SK-N-SH (cell line): ENCODE measurements at regions of chr5 and their contacts with region 1.

Region 1: GRCh38 chr5:33470544-33470943 is 29.8 kb downstream of the TARS1 start:
- DNase-seq: peak; percentile 30
- H3K4me3 ChIP-seq: no peak overlapping the region
- H3K27ac ChIP-seq: no peak overlapping the region; a peak in 1 of 4 replicates
- H3K4me1 ChIP-seq: no peaks in the 10 kb centered on the region; a peak in 1 of 4 replicates
- H3K27me3 ChIP-seq: no peaks in the 10 kb centered on the region
- CTCF ChIP-seq: peak; percentile 58
- EP300 ChIP-seq: no peak
- RAD21 ChIP-seq: peak; percentile 71

Region 2: DNA sequence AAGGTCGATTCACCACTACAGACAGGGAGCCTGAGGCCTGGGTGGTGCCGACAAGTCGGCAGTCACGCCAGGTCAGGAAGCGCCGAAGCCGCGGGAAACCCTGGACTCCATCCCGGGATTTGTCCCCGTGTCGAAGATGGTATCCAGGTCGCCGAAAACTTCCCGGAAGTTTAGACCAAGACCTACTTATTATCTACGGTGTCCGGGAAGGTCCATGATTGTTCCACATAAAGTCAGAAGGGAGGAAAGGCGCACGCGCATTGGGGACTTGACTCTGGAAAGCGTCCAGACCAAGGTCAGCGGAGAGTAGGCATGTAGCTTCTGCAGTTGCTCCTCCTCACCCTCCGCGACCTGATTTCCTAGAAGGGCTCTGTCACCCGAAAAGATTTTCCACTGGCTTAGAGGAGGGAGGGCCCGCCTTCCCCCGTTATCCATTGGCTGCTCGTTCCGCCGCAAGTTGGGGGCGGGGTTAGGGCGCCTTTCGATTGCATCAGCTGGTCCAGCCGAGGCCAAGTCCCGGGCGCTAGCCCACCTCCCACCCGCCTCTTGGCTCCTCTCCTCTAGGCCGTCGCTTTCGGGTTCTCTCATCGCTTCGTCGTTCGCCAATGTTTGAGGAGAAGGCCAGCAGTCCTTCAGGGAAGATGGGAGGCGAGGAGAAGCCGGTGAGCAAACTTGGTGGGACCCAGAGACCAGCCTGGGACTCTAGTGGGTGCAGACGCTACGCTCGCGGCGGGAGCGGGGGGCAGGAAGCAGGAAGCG is 29.9 kb before region 1 on chr5 and contains the start of gene TARS1:
- CTCF ChIA-PET with region 1: interaction called, 15 read pairs
- POLR2A ChIA-PET with region 1: no interaction called
- DNase-seq: peak; percentile 91
- H3K4me3 ChIP-seq: peak within 1 kb of the TSS; percentile 90 to 94
- H3K27ac ChIP-seq: peak within 1 kb of the TSS; percentile 99
- H3K4me1 ChIP-seq: peaks cover 8 to 10% of the 10 kb centered on the region in 2 experiments; a peak in 3 of 4 replicates
- H3K27me3 ChIP-seq: no peaks in the 10 kb centered on the region
- CTCF ChIP-seq: no peak
- EP300 ChIP-seq: peak in 1 of 2 experiments; percentile 47; a peak in 1 of 4 replicates
- RAD21 ChIP-seq: no peak
- polyA plus RNA-seq, gene TARS1: 58.4 and 74.1 TPM in 2 replicates

Region 3: DNA sequence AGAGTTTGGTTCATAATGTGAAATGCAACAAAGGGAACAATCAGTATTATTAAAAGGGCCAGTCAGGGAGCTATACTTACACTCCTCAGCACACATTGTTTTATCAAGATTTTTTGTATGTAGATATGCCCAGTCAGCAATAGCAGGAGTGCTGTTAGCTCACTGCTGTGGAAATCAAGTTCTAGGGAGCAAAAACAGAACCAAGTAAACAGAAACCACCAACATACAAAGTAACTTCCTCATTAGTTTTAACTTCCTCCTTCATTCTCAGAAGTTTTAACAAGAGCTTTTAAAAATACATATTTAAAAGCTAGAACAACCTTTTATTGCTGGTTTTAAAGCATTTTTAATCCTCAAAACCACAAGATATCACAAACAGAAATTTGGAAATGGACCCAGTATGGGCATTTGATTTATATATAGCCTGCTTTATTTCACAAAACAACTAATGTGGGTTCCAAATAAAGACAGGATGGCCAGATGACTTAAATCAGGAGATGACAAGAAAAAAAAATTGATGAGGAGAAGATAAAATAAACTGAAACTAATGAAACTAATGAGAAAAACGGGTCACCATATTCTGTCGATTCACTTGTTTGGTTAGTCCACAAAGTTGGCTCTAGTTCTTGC is 242.7 kb after region 1 on chr5:
- CTCF ChIA-PET with region 1: no interaction called
- POLR2A ChIA-PET with region 1: no interaction called
- DNase-seq: no peak
- H3K4me3 ChIP-seq: no peak overlapping the region
- H3K27ac ChIP-seq: no peak overlapping the region
- H3K4me1 ChIP-seq: no peaks in the 10 kb centered on the region
- H3K27me3 ChIP-seq: no peaks in the 10 kb centered on the region
- CTCF ChIP-seq: no peak
- EP300 ChIP-seq: no peak
- RAD21 ChIP-seq: no peak